GM12878 (cell line): ENCODE measurements at regions of chr4 and their contacts with region 1.

Region 1: GRCh38 chr4:95510145-95510544 is 38.6 kb downstream of the UNC5C start:
- DNase-seq: no peak
- ATAC-seq: peak; percentile 81
- H3K4me3 ChIP-seq: no peak overlapping the region
- H3K27ac ChIP-seq: no peak overlapping the region
- H3K4me1 ChIP-seq: no peaks in the 10 kb centered on the region
- H3K27me3 ChIP-seq: no peaks in the 10 kb centered on the region
- CTCF ChIP-seq: peak; percentile 46 to 62 (median 53)
- EP300 ChIP-seq: no peak
- POLR2A ChIP-seq: no peak
- RAD21 ChIP-seq: peak; percentile 55

Region 2: DNA sequence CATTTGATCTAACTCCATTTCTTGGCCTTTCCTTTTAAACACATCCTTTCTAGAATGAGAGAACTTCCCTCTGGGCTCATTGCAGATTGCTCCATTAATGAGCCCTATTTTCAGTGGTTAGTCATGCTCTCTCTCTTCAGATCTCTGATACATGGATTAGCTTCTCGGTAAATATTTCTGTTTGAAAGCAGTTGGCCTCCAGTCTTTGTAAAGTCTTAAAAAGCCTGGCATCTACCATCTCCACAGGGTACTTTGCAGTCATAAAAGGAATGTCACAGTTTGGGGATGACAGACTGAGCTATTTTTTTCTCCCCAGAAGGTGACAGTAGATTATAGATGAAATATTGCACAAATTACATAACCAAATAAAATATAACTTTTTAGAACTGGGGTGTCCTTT is 34.0 kb before region 1 on chr4:
- CTCF ChIA-PET with region 1: no interaction called
- POLR2A ChIA-PET with region 1: no interaction called
- RAD21 ChIA-PET with region 1: no interaction called
- SMC1A ChIA-PET with region 1: no interaction called
- in situ Hi-C with region 1: no loop called
- intact Hi-C with region 1: no loop called
- DNase-seq: no peak
- ATAC-seq: no peak
- H3K4me3 ChIP-seq: no peak overlapping the region
- H3K27ac ChIP-seq: no peak overlapping the region
- H3K4me1 ChIP-seq: no peaks in the 10 kb centered on the region
- H3K27me3 ChIP-seq: no peaks in the 10 kb centered on the region
- CTCF ChIP-seq: no peak
- EP300 ChIP-seq: no peak
- POLR2A ChIP-seq: no peak
- RAD21 ChIP-seq: no peak

Region 3: GRCh38 chr4:95494186-95494585 is 16.0 kb before region 1 on chr4:
- CTCF ChIA-PET with region 1: interaction called, 25 read pairs
- POLR2A ChIA-PET with region 1: no interaction called
- RAD21 ChIA-PET with region 1: interaction called, 3 read pairs
- SMC1A ChIA-PET with region 1: interaction called, 4 read pairs
- in situ Hi-C with region 1: no loop called
- intact Hi-C with region 1: no loop called
- DNase-seq: no peak
- ATAC-seq: no peak
- H3K4me3 ChIP-seq: no peak overlapping the region
- H3K27ac ChIP-seq: no peak overlapping the region
- H3K4me1 ChIP-seq: no peaks in the 10 kb centered on the region
- H3K27me3 ChIP-seq: no peaks in the 10 kb centered on the region
- CTCF ChIP-seq: no peak
- EP300 ChIP-seq: no peak
- POLR2A ChIP-seq: no peak
- RAD21 ChIP-seq: no peak

Region 4: GRCh38 chr4:95522682-95523530 is 12.8 kb after region 1 on chr4:
- CTCF ChIA-PET with region 1: interaction called, 19 read pairs
- POLR2A ChIA-PET with region 1: interaction called, 4 read pairs
- RAD21 ChIA-PET with region 1: interaction called, 14 read pairs
- SMC1A ChIA-PET with region 1: interaction called, 19 read pairs
- in situ Hi-C with region 1: no loop called
- intact Hi-C with region 1: no loop called
- DNase-seq: no peak
- ATAC-seq: peak; percentile 16
- H3K4me3 ChIP-seq: no peak overlapping the region
- H3K27ac ChIP-seq: no peak overlapping the region
- H3K4me1 ChIP-seq: no peaks in the 10 kb centered on the region; the same call in 1 of the 2 replicates
- H3K27me3 ChIP-seq: no peaks in the 10 kb centered on the region
- CTCF ChIP-seq: no peak
- EP300 ChIP-seq: no peak
- POLR2A ChIP-seq: no peak
- RAD21 ChIP-seq: no peak

Region 5: GRCh38 chr4:95544113-95545103 is 34.3 kb after region 1 on chr4:
- CTCF ChIA-PET with region 1: interaction called, 87 read pairs
- POLR2A ChIA-PET with region 1: interaction called, 3 read pairs
- RAD21 ChIA-PET with region 1: interaction called, 63 read pairs
- SMC1A ChIA-PET with region 1: interaction called, 89 read pairs
- in situ Hi-C with region 1: no loop called
- intact Hi-C with region 1: loop called (anchors 1 kb)
- DNase-seq: no peak
- ATAC-seq: peak; percentile 32
- H3K4me3 ChIP-seq: no peak overlapping the region
- H3K27ac ChIP-seq: no peak overlapping the region
- H3K4me1 ChIP-seq: no peaks in the 10 kb centered on the region
- H3K27me3 ChIP-seq: peaks cover 0 to 9% of the 10 kb centered on the region in 2 experiments; a peak in 1 of 4 replicates
- CTCF ChIP-seq: peak in 2 of 3 experiments; percentile 17 to 40; a peak in 1 of 6 replicates
- EP300 ChIP-seq: no peak
- POLR2A ChIP-seq: no peak
- RAD21 ChIP-seq: no peak

Region 6: GRCh38 chr4:96035727-96036126 is 525.6 kb after region 1 on chr4:
- CTCF ChIA-PET with region 1: interaction called, 8 read pairs
- POLR2A ChIA-PET with region 1: no interaction called
- RAD21 ChIA-PET with region 1: interaction called, 14 read pairs
- SMC1A ChIA-PET with region 1: interaction called, 5 read pairs
- in situ Hi-C with region 1: no loop called
- intact Hi-C with region 1: loop called (anchors 5 kb)
- DNase-seq: no peak
- ATAC-seq: peak; percentile 84
- H3K4me3 ChIP-seq: no peak overlapping the region
- H3K27ac ChIP-seq: no peak overlapping the region
- H3K4me1 ChIP-seq: no peaks in the 10 kb centered on the region
- H3K27me3 ChIP-seq: no peaks in the 10 kb centered on the region
- CTCF ChIP-seq: peak; percentile 22 to 52 (median 30); a peak in 3 of 6 replicates
- EP300 ChIP-seq: no peak
- POLR2A ChIP-seq: no peak
- RAD21 ChIP-seq: peak; percentile 32; the same call in 1 of the 2 replicates